ENCODE measurements at regions of chr3 and their contacts with region 1.

Region 1: GRCh38 chr3:169980055-169980454 is 13.4 kb downstream of the SEC62 start:
- DNase-seq: no peak
- ATAC-seq: no peak

Region 2: DNA sequence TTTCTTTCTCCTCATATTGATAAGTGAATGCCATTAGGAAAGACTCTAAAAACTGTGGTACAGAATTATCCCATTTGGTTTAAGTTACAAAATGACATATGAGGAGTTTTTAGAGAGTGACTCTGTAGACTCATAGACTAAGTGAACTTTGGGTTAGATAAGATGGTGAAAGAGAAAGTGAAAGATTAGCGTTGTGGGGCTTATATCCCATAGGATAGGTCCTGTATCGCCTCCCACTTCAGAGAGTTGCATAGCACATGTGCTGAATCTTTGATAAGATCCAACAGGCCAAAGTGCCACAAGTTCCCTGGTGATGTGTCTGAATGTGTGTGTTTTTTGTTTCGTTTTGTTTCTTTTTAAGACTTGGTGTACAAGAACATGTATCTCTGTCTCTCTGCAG is 983.4 kb before region 1 on chr3:
- intact Hi-C with region 1: no loop called
- DNase-seq: no peak
- ATAC-seq: no peak

Region 3: DNA sequence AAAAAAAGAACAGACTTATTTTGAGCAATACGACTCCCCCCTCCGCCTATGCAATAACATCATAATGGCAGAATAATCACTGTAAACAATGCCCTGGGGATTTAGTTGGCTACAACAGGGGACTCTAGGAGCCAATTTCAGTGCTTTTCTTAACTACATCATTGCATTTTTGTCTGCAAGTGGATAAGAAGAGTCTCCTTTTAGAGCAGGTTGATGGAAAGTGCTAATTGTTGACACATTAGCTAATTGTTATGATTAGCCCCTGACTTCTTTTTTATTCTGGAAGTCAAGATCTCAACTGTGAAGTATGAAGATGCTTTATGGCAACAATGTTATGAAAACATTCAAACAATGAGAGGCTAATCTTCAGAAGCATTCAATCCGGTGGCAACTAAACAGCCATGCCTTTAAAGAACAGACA is 437.7 kb before region 1 on chr3:
- intact Hi-C with region 1: no loop called
- DNase-seq: no peak
- ATAC-seq: peak; percentile 67 to 73

Region 4: GRCh38 chr3:169886671-169887070 is 93.4 kb before region 1 on chr3:
- intact Hi-C with region 1: no loop called
- DNase-seq: peak; percentile 80
- ATAC-seq: peak; percentile 97 to 99

Region 5: GRCh38 chr3:169901453-169901852 is 78.6 kb before region 1 on chr3:
- intact Hi-C with region 1: no loop called
- DNase-seq: no peak
- ATAC-seq: no peak

Region 6: DNA sequence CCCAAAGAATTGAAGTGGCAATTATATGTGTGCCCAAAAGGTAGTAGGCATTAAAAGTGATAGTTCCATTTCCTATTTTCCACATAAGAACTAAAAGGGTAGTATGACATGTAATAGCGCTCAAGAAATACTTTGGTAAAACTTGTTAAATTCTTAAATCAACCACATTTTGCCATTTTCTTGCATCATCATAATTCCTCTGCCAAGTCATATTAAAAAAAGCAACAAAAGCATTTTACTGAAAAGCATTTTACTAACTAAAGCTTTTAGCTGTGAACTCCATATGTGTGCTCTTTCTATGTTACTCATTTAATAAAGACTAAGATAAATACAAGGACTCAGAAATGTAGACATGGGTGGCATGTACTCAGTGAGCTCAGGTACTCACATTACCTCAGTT is 127.9 kb after region 1 on chr3:
- intact Hi-C with region 1: loop called in 1 of 2 experiments (anchors 10 kb)
- DNase-seq: no peak
- ATAC-seq: no peak

Measured in left cardiac atrium (tissue), 4 donors.